Sigmoid colon (tissue), 7 donors: ENCODE measurements at regions of chr5 and their contacts with region 1.

Region 1: GRCh38 chr5:176361437-176362232 is at the start of gene KIAA1191:
- DNase-seq: peak; percentile 96
- H3K4me3 ChIP-seq: peak within 1 kb of the TSS; percentile 72 to 99 (median 80)
- H3K27ac ChIP-seq: peak within 1 kb of the TSS; percentile 72 to 87 (median 84)
- H3K4me1 ChIP-seq: peaks cover 0 to 36% (median 29%) of the 10 kb centered on the region in 4 donors
- H3K27me3 ChIP-seq: no peaks in the 10 kb centered on the region
- CTCF ChIP-seq: peak in 2 of 4 experiments; percentile 3 to 9
- EP300 ChIP-seq: no peak
- POLR2A ChIP-seq: peak; percentile 55 to 85
- total RNA-seq, gene KIAA1191: 88.8 to 117 (median 108) TPM

Region 2: DNA sequence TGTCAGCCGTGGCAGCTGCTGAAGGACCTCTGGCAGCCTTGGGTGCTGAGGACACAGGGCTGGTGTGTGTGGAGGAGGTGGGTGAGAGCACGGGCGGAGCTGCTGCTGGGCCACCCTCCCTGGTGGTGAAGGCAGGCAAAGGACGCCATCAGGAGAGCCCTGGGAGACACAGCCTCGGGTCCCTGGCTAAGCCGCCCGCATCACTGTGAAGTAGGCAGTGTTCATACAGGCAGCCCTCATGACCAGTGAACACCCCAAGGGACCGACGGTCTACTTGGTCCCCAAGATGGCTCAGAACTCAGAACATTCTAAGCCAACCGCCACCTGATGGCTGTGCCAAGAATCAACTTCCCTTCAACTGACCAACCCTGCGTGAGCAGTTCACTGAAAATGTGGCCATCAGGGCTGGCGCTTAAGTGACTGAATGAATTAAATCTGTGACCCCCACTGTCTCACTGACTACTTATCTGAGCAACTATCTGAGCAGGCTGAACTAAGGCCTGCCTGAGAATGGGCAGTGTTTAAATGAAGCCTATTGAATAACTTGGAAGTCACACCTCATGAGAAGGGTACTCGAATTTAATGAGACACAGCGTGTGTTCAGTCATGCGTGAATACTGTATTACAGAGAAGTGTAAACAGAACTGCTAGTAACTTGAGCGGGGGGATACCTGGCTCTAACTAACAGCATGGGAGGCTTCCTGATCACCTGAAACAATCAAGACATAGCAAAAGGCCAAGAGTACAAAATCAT is 178.1 kb before region 1 on chr5:
- intact Hi-C with region 1: no loop called
- DNase-seq: no peak
- H3K4me3 ChIP-seq: no peak overlapping the region
- H3K27ac ChIP-seq: no peak overlapping the region
- H3K4me1 ChIP-seq: no peaks in the 10 kb centered on the region
- H3K27me3 ChIP-seq: peaks cover 0 to 13% (median 0%) of the 10 kb centered on the region in 3 donors
- CTCF ChIP-seq: no peak
- EP300 ChIP-seq: no peak
- POLR2A ChIP-seq: no peak

Region 3: GRCh38 chr5:176388444-176389134 is 27.0 kb after region 1 on chr5 and contains the starts of genes HIGD2A and NOP16:
- intact Hi-C with region 1: loop called (anchors 2 kb)
- DNase-seq: peak; percentile 100
- H3K4me3 ChIP-seq: peak within 1 kb of the TSS; percentile 57 to 65 (median 61)
- H3K27ac ChIP-seq: peak within 1 kb of the TSS; percentile 88 to 94 (median 93)
- H3K4me1 ChIP-seq: peaks cover 0 to 30% (median 25%) of the 10 kb centered on the region in 4 donors
- H3K27me3 ChIP-seq: no peaks in the 10 kb centered on the region
- CTCF ChIP-seq: peak in 1 of 4 experiments; percentile 36
- EP300 ChIP-seq: no peak
- POLR2A ChIP-seq: no peak
- total RNA-seq, gene HIGD2A: 201 to 249 (median 235) TPM
- total RNA-seq, gene NOP16: 4.4 to 17.8 (median 9.6) TPM

Region 4: DNA sequence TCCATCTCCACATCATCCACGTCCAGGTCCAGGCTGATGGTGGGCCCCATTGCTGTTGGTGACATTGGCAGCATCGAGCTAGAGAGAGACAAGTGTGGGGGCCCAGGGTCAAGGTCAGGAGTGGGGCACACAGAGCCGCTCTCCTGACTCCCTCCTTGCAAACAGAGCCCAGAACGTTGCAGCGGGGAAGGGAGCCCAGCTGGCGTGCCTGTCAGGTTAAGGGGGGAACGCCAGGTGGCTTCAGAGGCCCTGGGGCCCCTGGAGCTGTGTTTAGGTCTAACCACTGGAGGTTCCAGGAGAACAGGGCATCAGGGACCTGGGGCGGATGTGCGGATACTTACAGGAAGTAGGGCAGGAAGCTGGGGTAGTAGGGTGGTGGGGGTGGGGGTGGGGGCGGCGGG is 168.1 kb after region 1 on chr5:
- intact Hi-C with region 1: no loop called
- DNase-seq: no peak
- H3K4me3 ChIP-seq: no peak overlapping the region
- H3K27ac ChIP-seq: peak overlapping the region in 2 of 4 donors; percentile 13 to 97
- H3K4me1 ChIP-seq: peaks cover 0 to 50% (median 43%) of the 10 kb centered on the region in 4 donors
- H3K27me3 ChIP-seq: no peaks in the 10 kb centered on the region
- CTCF ChIP-seq: no peak
- EP300 ChIP-seq: no peak
- POLR2A ChIP-seq: no peak